ENCODE measurements at regions of chr1 and their contacts with region 1.

Region 1: GRCh38 chr1:98053471-98054366 is 132.9 kb upstream of the DPYD start:
- DNase-seq: peak; percentile 92
- H3K4me3 ChIP-seq: peak overlapping the region; percentile 32 to 71 (median 48)
- H3K27ac ChIP-seq: no peak overlapping the region
- H3K4me1 ChIP-seq: peaks cover 9 to 28% (median 17%) of the 10 kb centered on the region in 6 donors
- H3K27me3 ChIP-seq: peaks cover 4 to 75% (median 42%) of the 10 kb centered on the region in 7 donors
- CTCF ChIP-seq: peak; percentile 15 to 96 (median 88)
- POLR2A ChIP-seq: no peak

Region 2: GRCh38 chr1:96966536-96967138 is 1087.1 kb before region 1 on chr1:
- intact Hi-C with region 1: loop called (anchors 5 kb)
- DNase-seq: peak; percentile 84
- H3K4me3 ChIP-seq: no peak overlapping the region
- H3K27ac ChIP-seq: no peak overlapping the region
- H3K4me1 ChIP-seq: no peaks in the 10 kb centered on the region
- H3K27me3 ChIP-seq: peaks cover 0 to 17% (median 0%) of the 10 kb centered on the region in 7 donors
- CTCF ChIP-seq: peak; percentile 63 to 92 (median 85)
- POLR2A ChIP-seq: no peak

Region 3: DNA sequence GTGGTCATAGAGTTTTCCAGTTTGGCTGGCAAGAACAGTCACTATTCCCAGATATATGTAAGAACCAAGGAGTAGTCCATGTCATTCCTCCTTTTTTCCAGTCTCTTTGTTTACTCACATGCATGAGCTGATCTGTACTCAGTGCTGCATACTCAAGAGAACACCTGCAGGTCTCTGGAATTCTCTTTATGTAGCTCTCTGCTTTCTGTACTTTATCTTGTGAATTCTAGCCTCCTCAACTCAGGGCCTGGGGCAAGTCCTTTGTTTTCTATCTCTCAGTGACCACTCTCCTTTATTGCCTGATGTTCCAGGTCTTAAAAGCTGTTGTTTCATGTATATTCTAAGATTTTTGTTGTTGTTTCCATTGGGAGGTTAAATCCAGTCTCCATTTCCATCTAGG is 611.8 kb before region 1 on chr1:
- intact Hi-C with region 1: no loop called
- DNase-seq: no peak
- H3K4me3 ChIP-seq: no peak overlapping the region
- H3K27ac ChIP-seq: no peak overlapping the region
- H3K4me1 ChIP-seq: no peaks in the 10 kb centered on the region
- H3K27me3 ChIP-seq: no peaks in the 10 kb centered on the region
- CTCF ChIP-seq: no peak
- POLR2A ChIP-seq: no peak

Region 4: DNA sequence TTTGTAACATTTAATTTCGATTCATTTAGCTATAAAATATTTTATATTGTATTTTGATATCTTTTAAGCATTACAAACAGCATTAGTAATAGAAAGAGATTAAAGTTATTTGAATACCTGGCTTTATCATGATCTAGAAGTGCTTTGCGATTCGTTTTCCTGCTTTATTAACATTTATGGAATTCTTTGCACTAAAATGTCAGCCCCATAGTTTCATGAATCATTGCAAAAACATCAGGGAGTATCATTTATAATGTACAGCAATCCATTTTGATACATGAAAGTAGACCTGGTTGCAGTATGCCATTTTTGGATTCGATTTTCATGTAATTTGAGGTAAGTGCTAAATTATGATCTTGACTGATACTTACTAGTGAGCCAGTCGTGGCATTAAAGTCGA is 24.9 kb before region 1 on chr1:
- intact Hi-C with region 1: no loop called
- DNase-seq: no peak
- H3K4me3 ChIP-seq: no peak overlapping the region
- H3K27ac ChIP-seq: no peak overlapping the region
- H3K4me1 ChIP-seq: no peaks in the 10 kb centered on the region
- H3K27me3 ChIP-seq: no peaks in the 10 kb centered on the region
- CTCF ChIP-seq: no peak
- POLR2A ChIP-seq: no peak

Region 5: GRCh38 chr1:98468111-98468717 is 414.5 kb after region 1 on chr1:
- intact Hi-C with region 1: loop called (anchors 10 kb)
- DNase-seq: no peak
- H3K4me3 ChIP-seq: no peak overlapping the region
- H3K27ac ChIP-seq: no peak overlapping the region
- H3K4me1 ChIP-seq: no peaks in the 10 kb centered on the region
- H3K27me3 ChIP-seq: no peaks in the 10 kb centered on the region
- CTCF ChIP-seq: peak in 8 of 11 experiments; percentile 16 to 60 (median 50)
- POLR2A ChIP-seq: no peak

Measured in spleen (tissue), 13 donors.